A549 (cell line): ENCODE measurements at regions of chr12 and their contacts with region 1.

Region 1: GRCh38 chr12:3202734-3203446 is 125.7 kb downstream of the TSPAN9 start:
- DNase-seq: peak; percentile 47 to 84
- ATAC-seq: peak; percentile 25 to 62; a peak in 3 of 6 replicates
- H3K4me3 ChIP-seq: no peak overlapping the region
- H3K27ac ChIP-seq: no peak overlapping the region
- H3K4me1 ChIP-seq: peaks cover 4% of the 10 kb centered on the region; the same call in 1 of the 3 replicates
- CTCF ChIP-seq: peak; percentile 87
- EP300 ChIP-seq: no peak
- POLR2A ChIP-seq: no peak
- RAD21 ChIP-seq: peak; percentile 64 to 66

Region 2: DNA sequence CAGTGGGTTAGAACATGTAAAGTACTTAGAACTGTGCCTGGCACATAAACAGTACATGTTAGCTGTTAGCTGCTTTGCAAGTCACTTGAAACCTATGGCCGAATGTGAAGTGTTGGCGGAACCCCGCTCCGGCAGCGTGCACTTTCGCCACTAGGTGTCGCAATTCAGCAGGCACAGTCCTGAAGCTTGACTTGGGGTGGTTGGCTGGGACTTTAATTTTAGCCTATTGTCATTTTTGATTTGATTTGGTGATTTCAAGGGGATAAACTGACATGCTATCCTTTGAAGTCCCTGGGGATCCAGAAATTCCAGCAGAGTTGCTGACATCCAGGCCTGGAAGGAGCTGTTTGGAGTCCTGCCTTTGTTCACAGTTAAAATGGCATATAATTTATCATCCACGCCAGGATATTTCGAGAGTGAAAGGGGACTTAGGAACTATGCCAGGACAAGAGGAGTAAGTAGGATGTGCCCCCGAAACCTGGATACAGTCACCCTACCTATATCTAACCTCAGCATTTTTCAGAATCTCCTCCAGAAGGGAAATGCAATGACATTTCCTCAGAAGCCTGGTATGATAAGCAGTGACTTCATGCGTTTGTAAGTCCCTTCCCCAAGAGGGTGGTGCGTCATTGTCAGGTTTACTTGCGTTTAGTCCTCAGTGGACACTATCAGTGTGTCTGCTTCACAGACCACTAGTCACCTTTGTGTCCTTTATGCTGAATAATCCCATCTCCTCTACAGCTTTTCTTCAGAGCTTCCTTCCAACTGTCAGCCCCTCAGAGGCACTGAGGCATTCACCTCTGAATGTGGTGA is 129.2 kb before region 1 on chr12:
- CTCF ChIA-PET with region 1: interaction called, 21 read pairs
- POLR2A ChIA-PET with region 1: no interaction called
- DNase-seq: peak; percentile 89 to 92
- ATAC-seq: peak; percentile 49 to 72; a peak in 5 of 6 replicates
- H3K4me3 ChIP-seq: no peak overlapping the region
- H3K27ac ChIP-seq: no peak overlapping the region
- H3K4me1 ChIP-seq: peaks cover 11% of the 10 kb centered on the region; the same call in 2 of the 3 replicates
- CTCF ChIP-seq: peak; percentile 95
- EP300 ChIP-seq: no peak
- POLR2A ChIP-seq: no peak
- RAD21 ChIP-seq: peak; percentile 73 to 82

Region 3: GRCh38 chr12:3141339-3142321 is 61.3 kb before region 1 on chr12:
- CTCF ChIA-PET with region 1: interaction called, 68 read pairs
- POLR2A ChIA-PET with region 1: no interaction called
- DNase-seq: no peak
- ATAC-seq: peak in 1 of 2 experiments; percentile 55; a peak in 2 of 6 replicates
- H3K4me3 ChIP-seq: no peak overlapping the region
- H3K27ac ChIP-seq: no peak overlapping the region
- H3K4me1 ChIP-seq: peaks cover 7% of the 10 kb centered on the region; the same call in 1 of the 3 replicates
- CTCF ChIP-seq: no peak
- EP300 ChIP-seq: no peak
- POLR2A ChIP-seq: no peak
- RAD21 ChIP-seq: no peak

Region 4: GRCh38 chr12:3168223-3169221 is 34.4 kb before region 1 on chr12:
- CTCF ChIA-PET with region 1: interaction called, 40 read pairs
- POLR2A ChIA-PET with region 1: interaction called, 3 read pairs
- DNase-seq: peak; percentile 86 to 88
- ATAC-seq: peak; percentile 88 to 89
- H3K4me3 ChIP-seq: peak overlapping the region; percentile 1; the same call in 1 of the 3 replicates
- H3K27ac ChIP-seq: peak overlapping the region; percentile 78 to 87
- H3K4me1 ChIP-seq: peaks cover 44% of the 10 kb centered on the region
- CTCF ChIP-seq: no peak
- EP300 ChIP-seq: peak in 1 of 2 experiments; percentile 27; a peak in 1 of 5 replicates
- POLR2A ChIP-seq: no peak
- RAD21 ChIP-seq: no peak

Region 5: DNA sequence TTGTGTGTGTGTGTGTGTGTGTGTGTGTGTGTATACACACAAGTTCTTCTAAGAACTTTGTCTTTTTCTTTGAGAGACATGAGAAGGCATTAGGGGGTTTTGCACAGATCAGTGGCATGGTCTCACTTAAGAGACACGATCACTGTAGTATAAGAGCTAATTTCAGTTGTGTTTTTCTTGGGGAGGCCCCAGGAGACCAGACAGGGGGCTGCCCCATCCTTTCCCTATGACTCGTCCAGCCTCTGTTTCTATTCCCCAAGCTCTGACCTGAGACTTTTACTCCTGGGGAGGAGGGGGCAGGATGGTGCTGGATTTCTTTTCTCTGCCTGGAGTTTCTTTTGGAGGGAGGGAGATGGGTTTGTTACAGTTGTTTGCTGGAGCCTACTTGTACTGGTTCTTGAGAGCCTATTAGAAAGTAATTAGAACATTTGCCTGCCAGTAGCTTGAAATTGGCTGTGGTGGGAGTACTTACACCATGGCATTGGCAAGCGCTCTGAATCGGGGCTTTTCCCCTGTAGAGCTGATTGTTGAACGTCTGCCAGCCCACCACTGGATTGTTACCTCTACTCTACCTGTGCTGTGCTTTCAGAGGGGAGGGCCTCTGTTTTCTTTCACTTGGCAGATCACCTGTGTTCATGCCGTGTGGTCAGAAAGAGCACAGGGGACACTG is 16.2 kb before region 1 on chr12:
- CTCF ChIA-PET with region 1: interaction called, 41 read pairs
- POLR2A ChIA-PET with region 1: no interaction called
- DNase-seq: no peak
- ATAC-seq: no peak
- H3K4me3 ChIP-seq: no peak overlapping the region
- H3K27ac ChIP-seq: no peak overlapping the region
- H3K4me1 ChIP-seq: 0 out of 3 replicates have a peak, but pooled peaks cover 3% of the 10 kb centered on the region
- CTCF ChIP-seq: no peak
- EP300 ChIP-seq: no peak
- POLR2A ChIP-seq: no peak
- RAD21 ChIP-seq: no peak

Region 6: DNA sequence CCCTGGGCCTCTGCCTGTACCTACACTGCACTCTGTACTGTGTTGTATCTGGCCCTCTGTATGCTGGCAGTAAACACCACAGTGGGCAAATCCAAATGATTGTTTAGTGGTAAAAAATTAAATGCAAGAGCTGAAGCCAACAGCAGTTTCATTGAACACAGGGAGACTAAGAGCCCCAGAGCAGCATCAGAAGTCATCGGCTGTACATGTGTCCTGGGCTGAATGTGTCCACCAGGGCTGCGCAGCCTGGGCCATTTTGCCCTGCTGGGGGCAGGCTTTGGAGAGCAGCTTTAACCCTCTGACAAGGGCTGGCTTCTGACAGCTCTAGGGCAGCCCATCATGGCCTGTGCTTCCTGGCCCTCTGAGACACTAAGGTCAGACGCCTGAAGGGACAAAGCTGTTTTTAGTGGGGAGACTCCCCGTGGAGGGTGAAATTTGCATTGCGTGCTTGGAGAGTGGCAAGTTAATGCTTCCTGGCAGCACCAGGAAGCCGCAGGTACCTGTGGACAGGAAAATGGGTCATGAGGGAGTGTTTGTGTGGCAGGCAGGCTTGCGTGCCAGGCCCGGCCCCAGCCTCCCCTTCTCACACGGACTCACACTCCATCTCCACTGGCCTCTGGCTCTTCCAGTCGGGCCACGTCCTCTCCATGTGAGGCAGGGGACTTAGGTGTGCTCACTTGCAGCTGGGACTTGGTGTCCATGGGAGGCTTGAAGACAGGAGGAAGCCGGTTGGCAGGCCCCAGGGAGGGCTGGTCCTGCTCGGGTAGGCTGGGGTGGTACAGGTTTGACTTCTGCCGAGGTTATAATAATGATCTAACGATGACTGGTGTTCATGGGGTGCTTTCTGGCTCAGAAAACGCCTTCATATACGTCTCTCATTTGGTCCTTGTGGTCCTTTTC is 24.4 kb after region 1 on chr12:
- CTCF ChIA-PET with region 1: interaction called, 17 read pairs
- POLR2A ChIA-PET with region 1: no interaction called
- DNase-seq: no peak
- ATAC-seq: 0 out of 6 replicates have a peak, but pooled peaks of 1 of the 2 experiments have one; percentile 31
- H3K4me3 ChIP-seq: no peak overlapping the region
- H3K27ac ChIP-seq: no peak overlapping the region
- H3K4me1 ChIP-seq: no peaks in the 10 kb centered on the region
- CTCF ChIP-seq: no peak
- EP300 ChIP-seq: no peak
- POLR2A ChIP-seq: no peak
- RAD21 ChIP-seq: no peak

Region 7: DNA sequence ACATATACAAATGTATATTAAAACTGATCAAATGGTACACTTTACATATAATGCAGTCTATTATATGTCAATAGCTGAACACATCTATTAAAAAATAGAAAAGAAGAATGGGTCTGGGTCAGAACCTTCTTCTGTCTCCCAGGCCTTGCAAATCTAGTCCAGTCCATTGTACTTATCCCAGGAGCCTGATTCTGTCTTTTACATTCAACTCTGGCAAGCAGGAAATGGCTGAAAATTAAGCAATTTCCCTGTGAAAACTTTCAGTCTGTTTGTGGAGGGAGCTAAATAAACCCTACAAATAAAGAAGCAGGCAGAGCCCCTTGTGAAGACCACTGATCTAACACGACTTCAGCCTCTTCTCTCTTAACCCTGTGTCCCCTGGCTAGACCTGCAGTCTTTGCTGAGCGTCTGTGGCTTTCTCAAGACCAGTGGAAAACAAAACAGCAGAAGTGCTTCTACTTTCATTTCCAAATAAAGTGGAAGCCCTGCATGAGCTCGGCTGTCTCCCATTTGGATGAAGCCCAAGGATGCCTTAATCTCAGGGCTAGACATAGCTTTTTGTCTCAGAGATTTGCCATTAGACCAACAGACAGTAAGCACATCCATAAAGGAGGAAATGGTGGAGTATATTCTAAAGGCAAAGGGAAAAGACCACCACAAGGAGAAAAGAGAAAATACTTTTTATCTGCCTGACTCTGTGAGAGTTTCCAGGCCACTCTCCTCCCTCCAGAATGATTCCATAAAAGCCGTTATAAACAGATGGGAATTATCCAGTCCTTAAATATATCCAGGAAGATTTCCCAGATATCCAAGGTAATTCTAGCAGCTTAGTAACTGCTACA is 501.8 kb after region 1 on chr12:
- CTCF ChIA-PET with region 1: no interaction called
- POLR2A ChIA-PET with region 1: no interaction called
- DNase-seq: no peak
- ATAC-seq: no peak
- H3K4me3 ChIP-seq: no peak overlapping the region
- H3K27ac ChIP-seq: no peak overlapping the region
- H3K4me1 ChIP-seq: no peaks in the 10 kb centered on the region
- CTCF ChIP-seq: no peak
- EP300 ChIP-seq: no peak
- POLR2A ChIP-seq: no peak
- RAD21 ChIP-seq: no peak